ENCODE measurements at regions of chr5 and their contacts with region 1.

Region 1: GRCh38 chr5:177403792-177404640 is 3.6 kb upstream of the PFN3 start:
- DNase-seq: peak; percentile 75
- H3K4me3 Mint-ChIP-seq: peak overlapping the region; percentile 84
- H3K27ac Mint-ChIP-seq: no peak overlapping the region
- H3K4me1 Mint-ChIP-seq: peaks cover 17% of the 10 kb centered on the region
- H3K27me3 Mint-ChIP-seq: peaks cover 34% of the 10 kb centered on the region

Region 2: DNA sequence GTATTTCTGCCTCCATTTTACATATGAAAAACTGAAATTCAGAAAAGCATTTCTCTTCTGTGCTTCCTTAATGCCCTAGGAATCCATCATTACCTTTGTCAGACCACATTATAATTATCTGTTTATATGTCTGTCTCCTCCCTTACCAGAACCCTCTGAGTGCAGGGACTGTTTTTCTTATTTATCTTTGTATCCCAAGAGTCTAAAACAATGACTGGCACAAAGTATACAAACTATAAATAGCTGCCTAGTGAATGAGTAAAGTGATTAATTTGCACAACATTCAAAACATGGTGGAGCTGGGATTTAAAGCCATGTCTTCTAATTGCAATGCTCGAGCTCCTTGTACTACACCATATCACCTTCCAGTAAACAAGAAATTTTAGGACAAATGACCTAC is 455.6 kb before region 1 on chr5:
- intact Hi-C with region 1: no loop called
- DNase-seq: no peak
- H3K4me3 Mint-ChIP-seq: no peak overlapping the region
- H3K27ac Mint-ChIP-seq: no peak overlapping the region
- H3K4me1 Mint-ChIP-seq: peaks cover 4% of the 10 kb centered on the region
- H3K27me3 Mint-ChIP-seq: no peaks in the 10 kb centered on the region

Region 3: DNA sequence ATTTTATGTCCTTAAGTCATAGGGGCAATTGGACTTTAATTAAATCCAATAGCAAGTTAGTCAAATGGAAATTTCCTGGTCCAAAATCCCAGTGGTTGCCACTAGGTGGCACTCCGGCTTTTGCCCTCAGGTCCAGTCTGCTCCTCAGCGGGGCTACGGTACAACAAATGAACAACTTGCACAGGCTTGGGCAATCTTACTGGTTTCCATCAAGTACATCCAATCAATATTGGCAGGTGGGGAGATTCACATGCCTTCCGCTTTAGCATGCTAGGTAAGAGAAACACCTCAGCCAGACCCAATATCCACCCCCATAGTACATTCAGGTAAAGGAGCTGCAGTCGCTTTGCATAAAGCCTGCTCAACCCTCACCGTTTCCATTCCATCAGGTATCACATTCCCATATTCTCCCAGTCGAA is 86.0 kb before region 1 on chr5:
- intact Hi-C with region 1: loop called (anchors 1 kb)
- DNase-seq: peak; percentile 61
- H3K4me3 Mint-ChIP-seq: no peak overlapping the region
- H3K27ac Mint-ChIP-seq: no peak overlapping the region
- H3K4me1 Mint-ChIP-seq: peaks cover 22% of the 10 kb centered on the region
- H3K27me3 Mint-ChIP-seq: no peaks in the 10 kb centered on the region

Region 4: DNA sequence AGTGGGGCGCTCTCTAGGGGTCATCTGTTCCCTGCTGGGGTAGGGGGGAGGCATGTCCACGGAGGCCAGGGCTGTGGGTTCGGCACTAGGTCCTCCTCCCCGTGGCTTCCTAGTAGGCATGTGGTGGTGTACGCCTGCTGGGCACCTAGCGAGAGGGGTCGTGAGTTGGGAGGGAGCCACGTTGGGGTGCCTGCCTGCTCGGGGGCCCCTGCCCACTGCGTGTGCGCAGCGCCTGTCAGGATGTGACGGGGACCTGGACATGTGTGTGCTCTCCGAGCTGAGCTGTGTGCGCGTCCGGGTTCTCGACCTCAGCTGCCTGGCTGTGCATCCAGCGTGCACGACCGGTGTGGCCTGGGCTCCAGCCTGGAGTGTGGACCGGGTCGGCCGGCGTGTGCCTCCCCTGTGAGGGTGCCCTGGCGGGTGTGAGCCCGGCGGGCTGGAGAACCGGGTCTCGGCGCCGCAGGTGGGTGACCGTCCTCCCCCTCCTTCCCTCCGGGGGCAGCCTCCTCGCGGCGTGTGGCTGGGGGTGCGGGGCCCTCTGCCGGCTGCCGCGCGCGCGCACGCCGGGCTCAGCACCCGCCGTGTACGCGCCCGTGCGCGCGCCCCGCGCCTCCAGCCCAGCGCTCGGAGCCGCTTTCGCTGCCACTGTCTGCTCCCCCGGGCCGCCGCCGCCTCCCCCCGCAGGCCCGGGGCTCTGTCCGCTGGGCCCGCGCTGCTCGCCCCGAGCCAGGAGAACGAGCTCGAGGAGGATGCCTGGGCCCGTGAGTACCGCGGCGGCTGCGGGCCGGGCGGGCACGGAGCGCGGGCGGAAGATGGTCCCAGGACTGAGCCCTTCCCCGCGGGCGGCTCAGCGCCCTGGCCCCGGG is 42.4 kb after region 1 on chr5 and contains the start of gene PRR7:
- intact Hi-C with region 1: loop called (anchors 2 kb)
- DNase-seq: peak; percentile 62
- H3K4me3 Mint-ChIP-seq: peak within 1 kb of the TSS; percentile 77
- H3K27ac Mint-ChIP-seq: peak within 1 kb of the TSS; percentile 90
- H3K4me1 Mint-ChIP-seq: peaks cover 30% of the 10 kb centered on the region
- H3K27me3 Mint-ChIP-seq: peaks cover 9% of the 10 kb centered on the region
- total RNA-seq, gene PRR7: 10.3 and 11.2 TPM in 2 replicates

Measured in activated T-helper 1 cell treated with anti-CD3 and anti-CD28 coated beads, Interleukin-12 subunit alpha, Interleukin-12 subunit beta, Interleukin-2, Interleukin-4 antibody, amounts not matched to agents 30 ng/mL and 10 ng/mL and 1 ng/mL, durations not matched to agents 14 hours and 24 hours and 36 hours (primary cell).